Activated T-helper 1 cell treated with anti-CD3 and anti-CD28 coated beads, Interleukin-12 subunit alpha, Interleukin-12 subunit beta, Interleukin-2, Interleukin-4 antibody, amounts not matched to agents 30 ng/mL and 10 ng/mL and 1 ng/mL, durations not matched to agents 14 hours and 24 hours and 36 hours (primary cell): ENCODE measurements at regions of chr2 and their contacts with region 1.

Region 1: DNA sequence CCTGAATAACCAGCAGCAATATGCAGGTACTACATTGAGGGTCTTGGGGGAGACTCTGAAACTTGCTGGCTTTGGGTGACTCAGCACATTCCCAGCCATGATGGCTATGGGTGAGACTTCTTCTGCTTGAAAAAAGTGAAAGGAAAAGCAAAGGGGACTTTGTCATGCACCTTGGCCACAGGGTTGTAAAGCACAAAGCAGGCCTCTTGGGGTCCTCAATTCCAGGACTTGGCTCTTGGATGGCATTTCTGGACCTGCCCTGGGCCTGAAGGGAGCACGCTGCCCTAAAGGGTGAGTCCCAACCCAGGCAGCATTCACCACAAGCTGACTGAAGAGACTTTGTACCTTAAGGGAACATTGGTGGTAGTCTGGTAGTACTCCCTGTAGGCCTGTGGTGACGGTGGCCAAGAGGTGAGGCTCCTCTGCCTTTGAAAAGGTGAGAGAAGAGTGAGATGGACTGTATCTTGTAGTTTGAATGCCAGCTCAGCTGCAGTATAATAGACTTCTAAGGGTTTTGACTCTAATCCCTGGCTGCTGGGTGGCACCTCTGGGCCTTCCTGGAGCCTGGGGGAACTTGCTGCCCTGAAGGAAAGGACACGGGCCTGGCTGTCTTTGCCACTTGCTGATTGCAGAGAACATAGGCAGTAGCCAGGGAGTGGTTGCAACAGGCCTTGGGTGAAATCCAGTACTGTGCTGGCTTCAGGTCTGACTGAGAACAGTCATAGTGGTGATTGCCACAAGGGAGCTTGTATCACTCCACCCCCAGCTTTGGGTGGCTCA is 36.5 kb upstream of the CYTIP start:
- DNase-seq: peak; percentile 62
- H3K4me3 Mint-ChIP-seq: peak overlapping the region; percentile 83
- H3K27ac Mint-ChIP-seq: peak overlapping the region; percentile 99
- H3K4me1 Mint-ChIP-seq: peaks cover 95% of the 10 kb centered on the region
- H3K27me3 Mint-ChIP-seq: no peaks in the 10 kb centered on the region

Region 2: DNA sequence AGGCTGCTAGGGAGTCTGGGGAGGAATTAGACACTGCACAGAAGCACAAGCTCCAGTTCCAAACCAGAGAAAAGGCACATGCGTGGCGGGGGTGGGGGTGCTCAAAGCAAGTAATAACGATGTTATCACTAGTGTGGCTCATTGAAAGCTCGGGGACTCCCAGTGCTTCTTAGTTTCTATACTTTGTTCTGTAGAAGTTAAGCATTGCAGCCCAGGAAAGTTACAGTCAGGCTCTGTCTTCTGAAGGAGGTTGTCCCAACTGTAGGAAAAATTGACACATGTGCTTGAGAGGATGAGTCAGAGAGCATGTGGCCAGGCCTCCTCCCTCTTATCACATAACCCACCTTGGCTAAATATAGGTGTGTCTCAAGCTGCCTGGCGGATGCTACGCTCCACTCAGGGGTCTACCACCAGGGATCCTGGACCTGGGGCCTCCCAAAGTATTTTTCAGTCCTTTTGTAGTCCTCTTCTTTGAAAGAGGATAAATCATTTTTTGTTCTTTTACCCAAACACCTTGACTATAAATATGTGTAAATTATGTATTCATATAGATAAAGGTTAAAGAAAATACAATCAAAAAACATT is 219.1 kb before region 1 on chr2:
- intact Hi-C with region 1: loop called (anchors 2 kb)
- DNase-seq: peak; percentile 12
- H3K4me3 Mint-ChIP-seq: peak overlapping the region; percentile 57
- H3K27ac Mint-ChIP-seq: peak overlapping the region; percentile 86
- H3K4me1 Mint-ChIP-seq: peaks cover 37% of the 10 kb centered on the region
- H3K27me3 Mint-ChIP-seq: peaks cover 2% of the 10 kb centered on the region

Region 3: DNA sequence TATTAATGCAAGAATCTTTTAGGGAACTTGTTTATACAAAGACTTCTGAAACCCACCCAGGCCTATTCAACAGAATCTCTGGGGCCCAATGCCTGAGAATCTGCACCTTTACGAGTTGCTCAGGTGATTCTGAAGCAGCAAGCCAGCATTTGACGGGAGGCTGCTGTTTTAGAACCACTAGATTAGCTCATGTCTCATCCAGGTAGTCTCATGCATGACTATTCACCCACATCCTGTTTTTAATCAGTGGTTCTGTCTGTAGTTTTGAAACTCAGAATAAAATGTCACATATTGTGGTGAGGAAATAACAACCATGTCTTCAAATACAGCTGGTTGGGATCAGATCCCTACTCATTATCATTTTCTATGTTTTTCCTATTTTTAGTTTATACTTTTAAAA is 76.0 kb before region 1 on chr2:
- intact Hi-C with region 1: loop called (anchors 1 kb)
- DNase-seq: peak; percentile 62
- H3K4me3 Mint-ChIP-seq: peak overlapping the region; percentile 37
- H3K27ac Mint-ChIP-seq: peak overlapping the region; percentile 86
- H3K4me1 Mint-ChIP-seq: peaks cover 72% of the 10 kb centered on the region
- H3K27me3 Mint-ChIP-seq: no peaks in the 10 kb centered on the region

Region 4: DNA sequence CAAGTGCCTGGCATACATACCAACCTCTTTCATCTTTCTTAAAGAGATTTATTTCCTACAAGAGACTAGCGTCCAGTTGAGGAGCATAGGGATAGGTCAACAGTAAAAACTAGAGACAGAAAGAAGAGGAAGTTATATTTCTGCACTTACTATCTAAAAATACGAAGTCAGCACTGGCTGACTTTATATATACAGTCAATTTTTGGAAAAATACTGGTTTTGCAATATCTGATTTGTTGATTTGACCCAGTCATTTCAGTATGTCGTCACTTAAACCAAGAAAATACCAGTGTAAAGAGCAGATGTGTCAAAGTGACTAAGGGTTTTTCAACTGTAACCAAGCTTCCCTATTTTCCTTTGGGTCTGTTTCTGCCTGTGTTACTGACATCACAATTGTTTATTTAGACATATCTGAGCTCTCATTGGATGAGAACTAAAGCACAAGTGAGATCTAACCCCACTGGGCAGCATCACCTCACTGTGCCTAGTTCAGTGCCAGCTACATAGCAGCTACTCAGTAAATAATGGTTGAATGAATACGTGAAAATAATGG is 59.5 kb before region 1 on chr2:
- intact Hi-C with region 1: loop called (anchors 1 kb)
- DNase-seq: no peak
- H3K4me3 Mint-ChIP-seq: peak overlapping the region; percentile 69
- H3K27ac Mint-ChIP-seq: peak overlapping the region; percentile 91
- H3K4me1 Mint-ChIP-seq: peaks cover 84% of the 10 kb centered on the region
- H3K27me3 Mint-ChIP-seq: no peaks in the 10 kb centered on the region

Region 5: DNA sequence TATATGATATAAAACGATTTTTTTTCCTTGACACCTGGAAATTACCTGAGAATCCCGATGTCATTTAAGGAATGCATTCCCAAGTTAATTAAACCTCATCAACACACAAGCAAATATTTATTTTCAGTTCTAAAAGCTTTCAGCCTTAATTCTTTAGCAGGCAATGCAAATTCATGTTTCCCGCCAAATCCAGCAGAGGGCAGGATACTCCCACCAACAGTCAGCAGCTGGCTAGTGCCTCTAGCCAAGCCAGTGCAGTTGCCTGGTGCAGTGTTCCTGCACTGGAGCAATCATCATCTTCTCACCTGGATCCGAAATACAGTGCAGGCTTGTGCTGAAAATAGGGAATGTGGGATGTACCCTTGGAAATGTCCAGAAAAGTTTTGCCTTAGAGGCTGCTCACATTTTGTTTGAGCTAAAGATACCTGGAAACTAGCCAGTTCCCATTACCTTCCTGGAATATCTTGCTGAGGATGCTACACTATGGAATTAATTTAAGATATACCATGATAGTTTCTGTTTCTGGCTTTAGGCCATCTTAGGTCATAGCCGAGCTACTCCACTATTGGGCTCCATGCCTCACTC is 11.9 kb after region 1 on chr2:
- intact Hi-C with region 1: loop called (anchors 1 kb)
- DNase-seq: peak; percentile 63
- H3K4me3 Mint-ChIP-seq: no peak overlapping the region
- H3K27ac Mint-ChIP-seq: no peak overlapping the region
- H3K4me1 Mint-ChIP-seq: peaks cover 71% of the 10 kb centered on the region
- H3K27me3 Mint-ChIP-seq: no peaks in the 10 kb centered on the region